CD8-positive, alpha-beta T cell (primary cell): ENCODE measurements at regions of chr3 and their contacts with region 1.

Region 1: DNA sequence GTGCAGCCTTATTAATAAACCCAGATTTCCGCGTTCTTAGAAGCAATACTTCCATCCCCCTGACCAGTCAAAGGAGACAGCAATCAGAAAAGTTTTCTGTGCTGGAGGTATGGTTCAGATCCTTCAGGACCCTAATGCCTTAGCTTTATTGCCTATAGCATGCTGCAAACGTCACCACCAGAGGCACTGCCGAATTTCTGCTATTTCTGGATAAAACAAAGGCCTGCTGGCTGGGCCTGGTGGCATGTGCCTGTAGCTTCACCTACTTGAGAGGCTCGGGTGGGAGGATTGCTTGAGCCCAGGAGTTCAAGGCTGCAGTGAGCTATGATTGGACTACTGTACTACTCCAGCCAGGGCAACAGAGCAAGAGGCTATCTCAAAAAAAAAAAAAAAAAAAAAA is 407.2 kb downstream of the FOXP1 start:
- DNase-seq: no peak
- ATAC-seq: no peak
- H3K4me3 ChIP-seq: no peak overlapping the region
- H3K4me3 Mint-ChIP-seq: no peak overlapping the region
- H3K27ac ChIP-seq: no peak overlapping the region
- H3K27ac Mint-ChIP-seq: peak overlapping the region; percentile 18
- H3K4me1 ChIP-seq: no peaks in the 10 kb centered on the region
- H3K4me1 Mint-ChIP-seq: peaks cover 36% of the 10 kb centered on the region
- H3K27me3 ChIP-seq: no peaks in the 10 kb centered on the region
- H3K27me3 Mint-ChIP-seq: no peaks in the 10 kb centered on the region
- CTCF ChIP-seq: no peak

Region 2: GRCh38 chr3:71102111-71102983 is 74.0 kb before region 1 on chr3:
- CTCF ChIA-PET with region 1: no interaction called
- POLR2A ChIA-PET with region 1: no interaction called
- intact Hi-C with region 1: no loop called
- DNase-seq: no peak
- ATAC-seq: no peak
- H3K4me3 ChIP-seq: no peak overlapping the region
- H3K4me3 Mint-ChIP-seq: no peak overlapping the region
- H3K27ac ChIP-seq: no peak overlapping the region
- H3K27ac Mint-ChIP-seq: peak overlapping the region; percentile 90
- H3K4me1 ChIP-seq: peaks cover 63% of the 10 kb centered on the region
- H3K4me1 Mint-ChIP-seq: peaks cover 87% of the 10 kb centered on the region
- H3K27me3 ChIP-seq: no peaks in the 10 kb centered on the region
- H3K27me3 Mint-ChIP-seq: no peaks in the 10 kb centered on the region
- CTCF ChIP-seq: no peak

Region 3: DNA sequence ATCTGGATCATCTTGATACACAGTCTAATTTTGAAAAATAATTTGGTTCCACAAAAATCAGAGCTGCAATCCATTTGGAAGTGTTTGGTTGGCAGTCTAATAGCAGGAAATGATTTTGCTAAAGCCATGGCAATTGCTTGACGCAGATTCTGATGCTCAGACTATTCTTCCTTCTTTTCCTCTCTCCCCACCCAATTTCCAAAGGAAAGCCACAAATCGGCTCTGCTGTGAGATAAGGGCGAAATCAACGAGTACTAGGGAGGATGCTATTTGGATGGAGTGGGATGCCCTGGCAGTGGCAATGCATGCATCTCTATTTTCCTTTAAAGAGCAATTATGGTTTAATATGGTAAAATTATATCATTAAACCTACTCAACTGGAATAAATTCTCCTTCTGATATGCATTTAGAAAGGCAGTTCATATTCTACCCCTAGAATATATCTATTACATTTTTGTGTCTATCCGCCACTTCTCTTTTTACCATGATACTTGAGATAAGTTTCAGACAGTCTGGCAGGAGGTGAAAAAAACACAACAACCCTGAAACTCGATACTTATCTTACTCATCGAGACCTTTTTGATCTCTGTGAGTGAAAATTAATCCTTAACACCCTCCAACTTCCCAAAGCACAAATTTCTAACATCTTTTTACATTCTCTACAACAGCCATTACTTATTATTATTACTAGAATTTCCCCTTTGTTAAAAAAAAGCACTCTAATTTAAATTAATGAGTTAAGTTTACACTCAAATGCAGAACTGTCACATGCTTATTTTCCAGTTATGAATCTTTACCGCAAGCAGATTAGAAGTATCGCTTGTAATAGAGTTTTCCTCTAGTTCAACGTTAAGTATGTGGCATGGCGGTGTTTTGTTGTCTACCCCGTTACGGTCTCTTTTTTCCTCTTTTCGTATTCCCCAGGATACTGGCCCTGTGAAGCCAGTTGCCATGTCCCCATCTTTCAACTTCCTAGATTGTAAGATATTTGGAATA is 26.1 kb before region 1 on chr3:
- CTCF ChIA-PET with region 1: no interaction called
- POLR2A ChIA-PET with region 1: no interaction called
- intact Hi-C with region 1: loop called in 1 of 2 experiments (anchors 5 kb)
- DNase-seq: no peak
- ATAC-seq: no peak
- H3K4me3 ChIP-seq: no peak overlapping the region
- H3K4me3 Mint-ChIP-seq: no peak overlapping the region
- H3K27ac ChIP-seq: no peak overlapping the region
- H3K27ac Mint-ChIP-seq: peak overlapping the region; percentile 83
- H3K4me1 ChIP-seq: peaks cover 4% of the 10 kb centered on the region
- H3K4me1 Mint-ChIP-seq: peaks cover 65% of the 10 kb centered on the region
- H3K27me3 ChIP-seq: no peaks in the 10 kb centered on the region
- H3K27me3 Mint-ChIP-seq: no peaks in the 10 kb centered on the region
- CTCF ChIP-seq: no peak